B cell (primary cell): ENCODE measurements at regions of chr12 and their contacts with region 1.

Region 1: DNA sequence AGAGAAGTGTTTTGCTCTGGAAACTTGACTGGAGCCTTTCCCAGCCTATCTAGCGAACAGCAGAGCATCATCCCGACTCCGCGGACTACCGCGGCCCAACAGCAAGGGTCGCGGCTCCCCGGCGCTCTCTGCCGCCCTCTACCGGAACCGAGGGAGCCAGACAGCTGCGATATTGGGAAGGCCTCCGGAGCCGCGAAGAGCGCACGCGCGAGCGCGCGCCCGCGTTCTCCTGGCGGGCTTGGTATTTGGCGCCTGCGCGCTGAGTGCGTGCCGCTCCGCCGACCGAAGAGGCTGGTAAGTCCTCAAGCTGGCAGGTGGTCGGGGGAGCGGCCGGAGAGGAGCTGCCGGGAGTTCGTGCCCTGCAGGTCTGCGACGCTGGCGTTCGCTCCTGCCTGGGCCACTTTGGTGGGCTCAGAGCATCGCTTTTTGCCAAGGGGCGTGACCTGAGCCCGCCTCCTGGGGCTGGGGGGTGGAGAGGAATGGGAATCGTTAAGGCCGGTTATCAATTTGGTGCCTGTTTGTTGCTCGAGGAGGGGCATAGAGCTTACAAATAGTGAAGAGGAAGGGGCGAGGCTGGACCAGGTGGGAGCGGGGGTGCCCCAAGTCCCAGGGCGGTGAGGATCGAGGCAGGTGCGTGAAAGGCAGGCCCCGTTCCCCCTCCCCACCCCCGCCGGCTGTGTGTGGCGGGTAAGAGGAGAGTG is at the start of gene TMEM106C:
- DNase-seq: peak; percentile 97
- ATAC-seq: peak; percentile 99
- H3K4me3 ChIP-seq: peak within 1 kb of the TSS; percentile 68 to 96 (median 75)
- H3K4me3 Mint-ChIP-seq: peak within 1 kb of the TSS; percentile 96
- H3K27ac ChIP-seq: peak within 1 kb of the TSS; percentile 17 to 67
- H3K27ac Mint-ChIP-seq: peak within 1 kb of the TSS; percentile 86
- H3K4me1 ChIP-seq: peaks cover 6 to 14% of the 10 kb centered on the region in 2 donors
- H3K4me1 Mint-ChIP-seq: peaks cover 25% of the 10 kb centered on the region
- H3K27me3 ChIP-seq: no peaks in the 10 kb centered on the region
- H3K27me3 Mint-ChIP-seq: peaks cover 16% of the 10 kb centered on the region
- CTCF ChIP-seq: peak; percentile 94
- total RNA-seq, gene TMEM106C: 32.9 and 37.5 TPM in 2 replicates

Region 2: GRCh38 chr12:47054659-47055058 is 908.8 kb before region 1 on chr12:
- CTCF ChIA-PET with region 1: no interaction called
- POLR2A ChIA-PET with region 1: no interaction called
- intact Hi-C with region 1: no loop called
- DNase-seq: no peak
- ATAC-seq: no peak
- H3K4me3 ChIP-seq: peak overlapping the region in 1 of 5 experiments; percentile 8
- H3K4me3 Mint-ChIP-seq: no peak overlapping the region
- H3K27ac ChIP-seq: no peak overlapping the region
- H3K27ac Mint-ChIP-seq: no peak overlapping the region
- H3K4me1 ChIP-seq: peaks cover 0 to 8% of the 10 kb centered on the region in 2 donors
- H3K4me1 Mint-ChIP-seq: no peaks in the 10 kb centered on the region
- H3K27me3 ChIP-seq: peaks cover 0 to 3% (median 0%) of the 10 kb centered on the region in 4 experiments
- H3K27me3 Mint-ChIP-seq: no peaks in the 10 kb centered on the region
- CTCF ChIP-seq: no peak

Region 3: DNA sequence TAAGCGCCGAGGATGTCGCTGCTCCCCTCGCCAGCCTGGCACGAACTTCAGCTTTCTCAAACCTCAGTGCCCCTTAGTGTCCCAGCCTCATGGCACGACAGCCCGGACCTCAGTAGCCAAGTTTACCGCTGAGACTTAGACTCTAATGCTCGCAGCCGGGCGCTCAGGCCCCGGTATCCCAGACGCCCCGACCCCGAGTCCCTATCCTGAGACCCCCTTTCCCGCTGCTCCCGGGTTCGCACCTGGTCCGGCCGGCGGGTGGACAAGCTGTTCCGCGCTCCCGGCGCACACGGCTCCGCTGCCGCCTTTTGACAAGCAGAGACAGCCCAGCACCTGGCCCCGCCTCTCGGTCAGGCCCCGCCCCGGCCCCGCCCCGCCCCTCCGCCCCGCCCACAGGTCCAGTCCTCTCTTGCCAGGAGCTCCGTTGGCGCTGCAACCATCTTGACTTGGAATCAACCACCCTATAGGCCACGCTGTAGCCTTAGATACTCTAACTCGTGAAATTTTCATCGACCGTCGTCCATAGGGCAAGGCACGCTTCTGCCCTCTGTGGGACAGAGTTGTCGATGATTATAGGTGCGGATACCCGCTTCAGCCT is 58.7 kb before region 1 on chr12 and contains the start of gene VDR:
- CTCF ChIA-PET with region 1: interaction called, 4 read pairs
- POLR2A ChIA-PET with region 1: no interaction called
- intact Hi-C with region 1: loop called (anchors 1 kb)
- DNase-seq: peak; percentile 77
- ATAC-seq: peak; percentile 85
- H3K4me3 ChIP-seq: peak within 1 kb of the TSS; percentile 55 to 82 (median 64)
- H3K4me3 Mint-ChIP-seq: peak within 1 kb of the TSS; percentile 90
- H3K27ac ChIP-seq: peak within 1 kb of the TSS in 1 of 2 donors; percentile 6
- H3K27ac Mint-ChIP-seq: peak within 1 kb of the TSS; percentile 54
- H3K4me1 ChIP-seq: peaks cover 26 to 34% of the 10 kb centered on the region in 2 donors
- H3K4me1 Mint-ChIP-seq: peaks cover 36% of the 10 kb centered on the region
- H3K27me3 ChIP-seq: peaks cover 0 to 57% (median 21%) of the 10 kb centered on the region in 4 experiments
- H3K27me3 Mint-ChIP-seq: peaks cover 26% of the 10 kb centered on the region
- CTCF ChIP-seq: no peak
- total RNA-seq, gene VDR: 0.37 and 0.53 TPM in 2 replicates

Region 4: GRCh38 chr12:47935184-47935583 is 28.3 kb before region 1 on chr12:
- CTCF ChIA-PET with region 1: no interaction called
- POLR2A ChIA-PET with region 1: no interaction called
- intact Hi-C with region 1: no loop called
- DNase-seq: no peak
- ATAC-seq: no peak
- H3K4me3 ChIP-seq: no peak overlapping the region
- H3K4me3 Mint-ChIP-seq: no peak overlapping the region
- H3K27ac ChIP-seq: no peak overlapping the region
- H3K27ac Mint-ChIP-seq: no peak overlapping the region
- H3K4me1 ChIP-seq: no peaks in the 10 kb centered on the region
- H3K4me1 Mint-ChIP-seq: no peaks in the 10 kb centered on the region
- H3K27me3 ChIP-seq: peaks cover 0 to 4% (median 2%) of the 10 kb centered on the region in 4 experiments
- H3K27me3 Mint-ChIP-seq: peaks cover 42% of the 10 kb centered on the region
- CTCF ChIP-seq: no peak

Region 5: DNA sequence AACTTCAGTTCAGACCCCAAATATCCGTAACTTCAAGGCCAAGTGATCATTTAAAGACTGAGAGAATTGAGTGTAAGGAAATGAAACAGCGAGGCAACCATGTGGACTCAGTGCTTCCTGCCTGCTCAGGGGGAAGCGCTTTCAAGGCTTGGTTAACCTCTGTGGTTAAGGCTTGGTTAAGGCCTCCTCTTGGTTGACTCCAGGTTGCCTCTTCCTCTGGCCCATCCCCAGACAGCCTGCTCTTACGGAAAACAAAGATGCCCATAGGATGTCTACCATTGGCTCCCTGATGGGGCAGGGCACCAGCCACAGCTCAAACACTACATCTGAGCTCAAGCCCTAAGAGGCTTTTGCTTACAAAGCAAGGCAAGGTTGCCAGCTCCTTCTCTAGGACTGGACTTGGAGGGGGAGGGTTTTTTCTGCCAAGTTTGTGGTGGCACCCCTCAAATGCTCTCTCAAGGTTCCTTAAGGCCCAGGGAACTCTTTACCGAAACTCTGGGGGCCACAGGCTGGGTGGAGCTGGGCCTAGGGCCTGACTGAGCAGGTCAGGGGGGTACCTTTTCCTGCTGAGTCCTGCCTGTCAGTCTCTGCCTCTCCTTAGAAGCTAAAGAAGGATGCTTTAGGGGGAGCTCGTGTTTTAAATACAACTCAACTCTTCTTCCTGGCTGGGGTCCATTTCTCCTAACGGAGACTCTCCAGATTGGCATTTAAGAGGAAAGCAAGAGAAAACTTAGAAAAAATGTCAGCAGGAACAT is 27.0 kb after region 1 on chr12:
- CTCF ChIA-PET with region 1: interaction called, 4 read pairs
- POLR2A ChIA-PET with region 1: no interaction called
- intact Hi-C with region 1: loop called (anchors 1 kb)
- DNase-seq: peak; percentile 87
- ATAC-seq: peak; percentile 95
- H3K4me3 ChIP-seq: no peak overlapping the region
- H3K4me3 Mint-ChIP-seq: peak overlapping the region; percentile 39
- H3K27ac ChIP-seq: peak overlapping the region in 1 of 2 donors; percentile 40
- H3K27ac Mint-ChIP-seq: peak overlapping the region; percentile 74
- H3K4me1 ChIP-seq: peaks cover 27 to 49% of the 10 kb centered on the region in 2 donors
- H3K4me1 Mint-ChIP-seq: peaks cover 38% of the 10 kb centered on the region
- H3K27me3 ChIP-seq: peaks cover 0 to 29% (median 9%) of the 10 kb centered on the region in 4 experiments
- H3K27me3 Mint-ChIP-seq: peaks cover 14% of the 10 kb centered on the region
- CTCF ChIP-seq: no peak

Region 6: DNA sequence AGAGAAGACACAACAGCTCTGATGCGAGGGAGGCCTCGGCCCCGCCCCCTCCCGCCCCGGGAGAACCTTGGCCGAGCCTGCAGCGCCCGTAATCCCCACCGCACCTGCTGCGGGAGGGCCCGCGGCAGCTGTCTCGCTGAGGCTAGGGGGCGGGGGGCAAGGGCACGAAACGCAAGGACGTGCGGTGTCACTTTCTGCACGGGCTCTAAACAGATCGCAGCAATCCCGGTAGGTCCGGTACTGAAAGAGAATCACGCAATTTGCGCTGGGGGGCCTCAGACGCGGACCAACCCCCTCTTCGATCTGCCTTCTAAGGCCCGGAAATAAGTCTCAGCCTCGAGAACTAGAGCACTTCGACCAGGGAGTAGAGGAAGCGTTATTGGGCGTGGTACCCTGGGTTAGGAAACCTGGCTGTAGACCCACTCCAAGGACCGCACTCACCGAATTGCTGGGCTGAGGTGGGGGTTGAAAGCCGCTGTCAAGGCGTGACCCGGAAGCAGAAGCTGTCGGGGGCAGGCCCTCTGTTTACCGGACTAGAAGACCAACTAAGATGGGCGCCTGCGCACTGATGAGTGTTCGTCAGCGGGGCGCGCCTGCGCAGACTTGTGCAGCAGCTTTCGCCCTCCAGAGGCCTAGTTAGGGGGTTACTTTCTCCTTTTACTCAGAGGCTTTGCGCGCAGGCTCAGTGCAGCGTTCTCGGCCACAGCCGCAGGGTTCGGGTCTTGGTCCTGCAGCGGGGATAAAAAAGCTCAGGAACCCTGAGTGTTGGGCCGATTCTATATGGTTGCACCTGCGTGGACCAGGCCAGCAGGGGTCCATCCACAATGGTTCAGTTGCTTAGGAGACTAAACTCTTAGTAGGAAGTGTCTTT is 193.8 kb after region 1 on chr12 and contains the start of gene ASB8:
- CTCF ChIA-PET with region 1: interaction called, 6 read pairs
- POLR2A ChIA-PET with region 1: no interaction called
- intact Hi-C with region 1: loop called (anchors 2 kb)
- DNase-seq: peak; percentile 99
- ATAC-seq: peak; percentile 91
- H3K4me3 ChIP-seq: peak within 1 kb of the TSS; percentile 81 to 98 (median 88)
- H3K4me3 Mint-ChIP-seq: peak within 1 kb of the TSS; percentile 99
- H3K27ac ChIP-seq: peak within 1 kb of the TSS; percentile 67 to 84
- H3K27ac Mint-ChIP-seq: peak within 1 kb of the TSS; percentile 99
- H3K4me1 ChIP-seq: peaks cover 14 to 15% of the 10 kb centered on the region in 2 donors
- H3K4me1 Mint-ChIP-seq: peaks cover 21% of the 10 kb centered on the region
- H3K27me3 ChIP-seq: no peaks in the 10 kb centered on the region
- H3K27me3 Mint-ChIP-seq: no peaks in the 10 kb centered on the region
- CTCF ChIP-seq: peak; percentile 64
- total RNA-seq, gene ASB8: 53.2 and 54.8 TPM in 2 replicates

Region 7: DNA sequence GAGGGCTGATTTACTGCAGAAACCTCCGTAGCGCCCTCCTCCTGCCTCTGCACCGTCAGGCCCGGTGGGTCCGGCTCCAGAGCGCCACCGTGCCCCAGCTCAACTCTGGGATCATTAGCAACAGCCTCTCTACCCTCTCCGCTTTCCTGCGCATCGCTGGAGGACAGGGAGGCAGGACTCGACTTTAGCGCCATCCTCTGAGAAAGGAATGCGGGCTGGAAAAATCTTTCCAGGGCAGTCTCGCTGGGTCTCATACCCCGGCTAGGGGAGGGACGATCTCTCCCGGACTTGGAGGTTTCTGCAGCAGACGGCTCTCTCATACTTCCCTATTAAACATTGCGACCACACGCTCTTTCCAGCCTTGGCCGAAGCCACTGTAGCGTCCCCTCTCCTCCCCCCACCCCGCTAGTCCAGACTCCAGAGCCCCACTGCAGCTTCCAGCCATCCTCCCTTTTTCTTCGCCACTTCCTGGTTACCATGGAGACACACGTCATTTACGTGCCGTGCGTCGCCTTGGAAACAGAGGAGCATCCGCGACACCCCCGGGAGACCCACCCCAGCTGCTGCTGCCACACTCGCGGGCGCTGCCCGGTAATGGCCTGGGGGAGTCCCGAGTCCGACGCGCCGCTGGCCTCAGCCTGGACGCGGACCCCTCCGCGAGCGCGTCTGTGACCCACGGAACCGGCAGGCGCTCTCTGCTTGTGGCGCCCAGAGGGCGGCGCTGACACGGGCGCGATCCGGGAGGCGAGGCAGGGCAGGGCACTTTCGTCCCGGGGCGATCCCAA is 219.8 kb after region 1 on chr12 and contains the start of gene CCDC184:
- CTCF ChIA-PET with region 1: no interaction called
- POLR2A ChIA-PET with region 1: no interaction called
- intact Hi-C with region 1: loop called (anchors 1 kb)
- DNase-seq: peak; percentile 89
- ATAC-seq: peak; percentile 75
- H3K4me3 ChIP-seq: peak within 1 kb of the TSS; percentile 69 to 90 (median 77)
- H3K4me3 Mint-ChIP-seq: peak within 1 kb of the TSS; percentile 98
- H3K27ac ChIP-seq: peak within 1 kb of the TSS in 1 of 2 donors; percentile 11
- H3K27ac Mint-ChIP-seq: peak within 1 kb of the TSS; percentile 84
- H3K4me1 ChIP-seq: peaks cover 27 to 29% of the 10 kb centered on the region in 2 donors
- H3K4me1 Mint-ChIP-seq: peaks cover 28% of the 10 kb centered on the region
- H3K27me3 ChIP-seq: peaks cover 0 to 38% (median 15%) of the 10 kb centered on the region in 4 experiments
- H3K27me3 Mint-ChIP-seq: peaks cover 37% of the 10 kb centered on the region
- CTCF ChIP-seq: peak; percentile 45
- total RNA-seq, gene CCDC184: 0.54 and 0.66 TPM in 2 replicates